ENCODE measurements at regions of chr13 and their contacts with region 1.

Region 1: DNA sequence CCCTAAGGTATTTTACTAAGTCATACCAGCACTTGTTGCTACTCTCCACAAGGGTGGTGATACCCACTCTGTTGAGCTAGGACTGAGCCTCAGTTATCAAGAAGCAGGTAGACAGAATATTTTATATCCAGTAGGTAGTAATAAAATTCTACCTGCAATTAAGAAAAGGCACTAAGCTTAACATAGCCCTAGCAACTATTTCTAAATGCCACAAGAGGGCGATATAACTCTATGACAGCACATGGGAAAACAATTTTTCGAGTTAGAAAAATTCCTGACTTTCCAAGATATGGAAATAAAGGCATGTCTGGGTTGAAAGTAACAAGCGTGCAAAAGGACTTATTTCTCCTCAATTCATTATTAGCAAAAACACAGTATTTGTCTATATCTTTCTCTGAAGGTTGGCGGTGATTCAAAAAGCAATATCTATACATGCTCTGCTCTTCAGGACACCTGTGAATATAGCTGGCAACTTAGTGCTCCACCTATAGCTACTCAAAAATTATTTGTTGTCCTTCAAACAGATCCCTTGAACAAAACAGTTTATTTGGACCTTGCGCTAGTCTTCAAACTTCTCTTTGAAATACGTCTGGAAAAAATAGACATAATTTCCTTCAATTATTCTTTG is 14.7 kb downstream of the CCDC169 start:
- DNase-seq: peak; percentile 21 to 43 (median 38)
- H3K4me3 ChIP-seq: no peak overlapping the region
- H3K27ac ChIP-seq: no peak overlapping the region
- H3K4me1 ChIP-seq: peaks cover 0 to 2% (median 0%) of the 10 kb centered on the region in 4 experiments
- H3K27me3 ChIP-seq: no peaks in the 10 kb centered on the region

Region 2: DNA sequence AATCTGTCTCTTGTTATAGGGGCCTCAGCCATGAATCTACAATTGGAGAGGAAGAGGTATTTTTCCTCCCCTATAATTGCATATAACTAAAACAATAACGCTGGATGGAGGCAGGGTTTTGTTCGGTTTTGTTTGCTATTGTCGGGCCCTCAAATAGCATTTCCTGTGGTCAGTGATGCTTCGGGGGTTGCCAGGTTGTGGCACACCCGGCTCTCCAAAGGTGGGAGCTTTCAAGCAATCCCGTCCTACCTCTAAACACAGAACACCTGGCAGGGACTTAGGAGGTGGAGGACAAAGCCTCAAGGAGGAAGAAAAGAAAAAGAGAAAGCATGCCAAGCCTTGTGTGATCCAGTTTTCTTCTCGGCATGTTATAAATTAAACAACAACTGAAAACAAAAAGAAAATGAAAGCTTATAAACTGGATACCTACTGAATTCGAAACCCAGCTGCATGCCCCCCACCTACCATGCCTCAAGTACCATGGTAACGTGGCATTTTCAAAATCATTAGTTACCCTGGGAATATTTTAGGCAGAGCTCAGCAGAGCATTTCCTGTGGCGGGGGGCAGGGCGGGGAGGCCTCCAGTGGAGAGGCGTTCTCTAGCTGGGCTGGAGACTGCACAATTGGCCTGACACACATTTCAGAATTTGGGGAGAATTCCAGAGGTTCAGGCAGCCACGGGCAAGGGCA is 365.5 kb before region 1 on chr13:
- CTCF ChIA-PET with region 1: no interaction called
- POLR2A ChIA-PET with region 1: no interaction called
- DNase-seq: no peak
- H3K4me3 ChIP-seq: peak overlapping the region in 1 of 7 experiments; percentile 26
- H3K27ac ChIP-seq: no peak overlapping the region
- H3K4me1 ChIP-seq: no peaks in the 10 kb centered on the region
- H3K27me3 ChIP-seq: peaks cover 0 to 5% (median 0%) of the 10 kb centered on the region in 5 experiments

Region 3: GRCh38 chr13:36294096-36294495 is 11.2 kb after region 1 on chr13:
- CTCF ChIA-PET with region 1: interaction called, 14 read pairs
- POLR2A ChIA-PET with region 1: no interaction called
- DNase-seq: no peak
- H3K4me3 ChIP-seq: no peak overlapping the region
- H3K27ac ChIP-seq: no peak overlapping the region
- H3K4me1 ChIP-seq: peaks cover 0 to 20% (median 9%) of the 10 kb centered on the region in 4 experiments
- H3K27me3 ChIP-seq: peaks cover 0 to 6% (median 2%) of the 10 kb centered on the region in 5 experiments

Region 4: GRCh38 chr13:36346222-36347083 is 63.5 kb after region 1 on chr13 and contains the start of gene SPART:
- CTCF ChIA-PET with region 1: interaction called, 16 read pairs
- POLR2A ChIA-PET with region 1: no interaction called
- DNase-seq: peak; percentile 91 to 94 (median 92)
- H3K4me3 ChIP-seq: peak within 1 kb of the TSS; percentile 48 to 93 (median 86)
- H3K27ac ChIP-seq: peak within 1 kb of the TSS; percentile 98 to 99
- H3K4me1 ChIP-seq: peaks cover 8 to 34% (median 19%) of the 10 kb centered on the region in 4 experiments
- H3K27me3 ChIP-seq: no peaks in the 10 kb centered on the region

Region 5: DNA sequence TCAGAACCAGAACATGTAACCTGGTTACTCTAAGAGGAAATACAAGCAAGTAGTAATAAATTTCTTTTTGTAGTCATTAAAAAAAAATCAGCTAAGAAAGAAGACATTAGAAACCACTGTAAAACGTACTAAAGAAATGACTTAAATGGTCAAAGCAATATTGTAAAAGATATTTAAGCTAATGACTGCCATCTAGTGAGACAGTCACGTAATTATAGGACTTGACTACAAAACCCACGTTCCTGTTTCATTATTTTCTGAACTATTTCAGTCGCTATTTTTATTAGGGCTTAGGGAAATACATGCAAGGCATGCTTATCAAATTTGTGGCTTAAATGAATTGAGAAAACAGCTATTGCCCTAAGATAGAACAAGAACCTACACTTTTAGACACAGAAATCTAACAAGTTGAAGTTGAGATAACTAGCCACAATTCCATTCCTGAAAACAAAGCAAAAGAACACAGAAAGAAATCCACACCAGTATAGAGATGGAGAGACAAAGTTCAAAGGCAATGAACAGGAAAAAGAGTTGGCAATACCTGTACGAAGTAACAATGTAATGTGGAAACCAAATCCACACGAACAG is 698.3 kb after region 1 on chr13:
- CTCF ChIA-PET with region 1: interaction called, 18 read pairs
- POLR2A ChIA-PET with region 1: no interaction called
- DNase-seq: peak; percentile 66 to 83 (median 81)
- H3K4me3 ChIP-seq: no peak overlapping the region
- H3K27ac ChIP-seq: peak overlapping the region in 1 of 2 experiments; percentile 14
- H3K4me1 ChIP-seq: no peaks in the 10 kb centered on the region
- H3K27me3 ChIP-seq: no peaks in the 10 kb centered on the region

Measured in common myeloid progenitor, CD34-positive (primary cell).